ENCODE measurements at regions of chr10 and their contacts with region 1.

Region 1: DNA sequence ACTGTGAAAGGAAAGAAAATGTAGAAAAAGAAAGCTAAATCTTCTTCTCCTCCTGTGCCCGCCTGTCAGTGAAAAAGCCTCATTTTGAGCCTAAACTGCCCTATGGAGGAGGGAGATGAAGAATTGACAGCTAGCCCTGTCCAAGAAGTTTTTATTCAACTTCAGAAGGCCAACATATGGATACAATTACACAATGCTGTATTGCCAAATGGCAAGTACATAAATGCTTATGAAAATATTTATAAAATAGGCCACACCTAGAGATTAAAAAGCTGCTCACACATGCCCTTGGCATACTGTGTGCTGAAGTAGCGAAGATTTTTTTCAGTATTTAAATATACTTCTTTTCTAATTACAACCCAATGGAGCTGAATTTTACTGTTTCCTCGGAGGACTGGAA is 65.1 kb upstream of the NEBL start:
- DNase-seq: no peak

Region 2: GRCh38 chr10:21771219-21771618 is 809.1 kb after region 1 on chr10:
- intact Hi-C with region 1: loop called in 1 of 2 experiments (anchors 10 kb)
- DNase-seq: no peak

Measured in posterior vena cava (tissue), 2 donors.